Activated naive CD4-positive, alpha-beta T cell treated with anti-CD3 and anti-CD28 coated beads for 36 hours (primary cell): ENCODE measurements at regions of chr14 and their contacts with region 1.

Region 1: DNA sequence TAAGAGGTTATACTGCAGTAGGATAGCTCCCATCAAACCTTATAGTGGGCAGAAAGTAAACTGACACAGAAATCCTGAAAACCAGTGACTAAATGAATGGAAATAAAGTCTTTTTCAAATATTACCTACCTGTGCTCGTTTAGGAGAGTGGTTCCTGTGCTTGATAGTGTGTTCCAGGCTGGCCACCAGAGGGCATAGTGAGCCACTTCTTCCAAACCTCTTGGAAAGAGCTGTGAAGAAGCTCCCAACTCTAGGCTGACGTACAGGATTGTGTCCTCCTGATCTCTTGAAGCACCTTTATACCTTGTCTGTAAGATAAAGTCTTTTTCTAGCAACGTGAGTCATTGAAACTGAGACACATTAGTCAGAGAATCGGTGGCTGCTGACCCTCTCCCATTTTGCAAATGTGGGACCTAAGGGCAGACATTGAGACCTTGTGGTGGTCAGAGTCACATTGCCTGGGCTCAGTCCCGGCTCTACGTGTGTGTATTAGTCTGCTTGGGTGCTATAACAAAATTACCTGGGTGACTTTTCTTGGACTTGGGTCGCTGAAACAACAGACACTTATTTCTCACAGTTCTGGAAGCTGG is 17.6 kb downstream of the TDP1 start:
- DNase-seq: peak; percentile 70
- H3K4me3 Mint-ChIP-seq: no peak overlapping the region
- H3K27ac Mint-ChIP-seq: no peak overlapping the region
- H3K4me1 Mint-ChIP-seq: no peaks in the 10 kb centered on the region
- H3K27me3 Mint-ChIP-seq: no peaks in the 10 kb centered on the region

Region 2: DNA sequence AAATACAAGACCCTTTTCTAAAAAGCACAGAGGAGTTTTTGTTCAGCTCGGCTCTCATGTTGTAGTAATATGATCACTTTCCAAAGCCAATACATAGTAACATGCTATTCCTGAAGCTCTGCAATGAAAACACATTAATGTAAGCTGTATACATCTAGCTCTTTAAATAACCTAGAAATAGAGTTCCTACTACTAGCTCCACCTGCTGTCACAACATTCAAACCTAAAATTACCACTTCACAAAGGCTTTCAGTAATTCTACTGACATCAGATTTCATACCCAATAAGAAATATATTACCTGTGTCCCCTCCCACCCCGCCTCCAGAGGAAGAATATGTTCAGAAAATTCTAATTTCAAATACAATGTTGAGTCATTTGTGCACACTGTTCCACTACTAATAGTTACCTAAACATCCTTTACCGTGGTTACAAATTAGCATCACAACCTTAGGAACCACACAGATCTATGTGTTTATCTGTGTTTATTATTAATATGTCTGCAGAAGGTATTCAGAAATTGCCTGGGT is 36.6 kb before region 1 on chr14:
- CTCF ChIA-PET with region 1: interaction called, 21 read pairs
- intact Hi-C with region 1: loop called (anchors 2 kb)
- DNase-seq: no peak
- H3K4me3 Mint-ChIP-seq: no peak overlapping the region
- H3K27ac Mint-ChIP-seq: no peak overlapping the region
- H3K4me1 Mint-ChIP-seq: peaks cover under 1% of the 10 kb centered on the region
- H3K27me3 Mint-ChIP-seq: no peaks in the 10 kb centered on the region

Region 3: DNA sequence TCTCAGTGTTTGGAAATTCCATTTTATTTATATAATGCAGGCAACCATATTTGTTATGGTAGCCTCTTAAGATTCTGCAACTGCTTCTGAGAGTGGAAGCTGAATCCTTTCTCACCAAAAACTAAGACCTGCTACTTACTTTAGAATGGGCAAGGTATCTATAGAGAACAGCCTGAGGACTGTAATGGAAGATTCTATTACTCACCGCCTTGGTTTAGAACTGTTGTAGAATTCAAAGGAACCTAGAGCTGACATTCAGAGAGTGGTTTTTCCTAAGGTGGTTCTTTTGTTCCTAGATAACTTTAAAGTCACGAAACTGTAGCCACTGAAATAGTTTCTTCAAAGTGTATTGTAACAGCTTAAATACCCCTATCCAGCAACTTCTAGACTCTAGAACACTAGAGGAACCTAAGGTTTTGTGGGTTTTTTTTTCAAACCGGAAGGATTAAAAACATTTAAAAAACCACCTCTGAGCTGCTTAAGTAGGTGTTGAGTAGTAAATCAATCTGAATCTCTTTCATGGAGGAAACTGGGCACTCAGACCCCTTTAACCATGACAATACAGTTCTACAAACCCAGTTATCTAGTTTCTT is 13.4 kb before region 1 on chr14:
- CTCF ChIA-PET with region 1: interaction called, 36 read pairs
- intact Hi-C with region 1: no loop called
- DNase-seq: no peak
- H3K4me3 Mint-ChIP-seq: peak overlapping the region; percentile 36
- H3K27ac Mint-ChIP-seq: peak overlapping the region; percentile 76
- H3K4me1 Mint-ChIP-seq: peaks cover 74% of the 10 kb centered on the region
- H3K27me3 Mint-ChIP-seq: no peaks in the 10 kb centered on the region

Region 4: DNA sequence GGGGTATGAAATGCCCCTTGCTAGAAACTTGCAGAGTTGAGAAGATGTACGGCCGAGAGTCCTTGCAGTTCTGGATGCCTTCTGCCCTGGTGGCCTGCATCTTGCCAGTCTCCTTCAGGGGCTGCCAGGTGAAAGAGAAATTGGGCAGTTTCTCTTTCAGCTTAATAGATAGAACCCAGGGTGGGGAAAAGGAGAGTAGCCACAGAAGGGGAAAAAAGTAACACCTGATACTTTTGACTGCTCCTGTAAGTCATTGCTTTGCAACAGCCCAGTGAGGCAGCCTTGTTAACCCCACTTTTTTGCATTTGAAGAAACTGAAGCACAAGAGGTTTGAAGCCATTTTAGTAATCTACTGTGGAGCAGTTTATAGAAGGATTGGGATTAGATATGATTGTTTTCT is 10.0 kb after region 1 on chr14:
- CTCF ChIA-PET with region 1: interaction called, 21 read pairs
- intact Hi-C with region 1: no loop called
- DNase-seq: no peak
- H3K4me3 Mint-ChIP-seq: no peak overlapping the region
- H3K27ac Mint-ChIP-seq: no peak overlapping the region
- H3K4me1 Mint-ChIP-seq: no peaks in the 10 kb centered on the region
- H3K27me3 Mint-ChIP-seq: no peaks in the 10 kb centered on the region

Region 5: GRCh38 chr14:90060312-90060964 is 87.1 kb after region 1 on chr14:
- CTCF ChIA-PET with region 1: interaction called, 4 read pairs
- intact Hi-C with region 1: loop called (anchors 2 kb)
- DNase-seq: peak; percentile 49
- H3K4me3 Mint-ChIP-seq: peak overlapping the region; percentile 72
- H3K27ac Mint-ChIP-seq: no peak overlapping the region
- H3K4me1 Mint-ChIP-seq: peaks cover 14% of the 10 kb centered on the region
- H3K27me3 Mint-ChIP-seq: peaks cover 54% of the 10 kb centered on the region

Region 6: DNA sequence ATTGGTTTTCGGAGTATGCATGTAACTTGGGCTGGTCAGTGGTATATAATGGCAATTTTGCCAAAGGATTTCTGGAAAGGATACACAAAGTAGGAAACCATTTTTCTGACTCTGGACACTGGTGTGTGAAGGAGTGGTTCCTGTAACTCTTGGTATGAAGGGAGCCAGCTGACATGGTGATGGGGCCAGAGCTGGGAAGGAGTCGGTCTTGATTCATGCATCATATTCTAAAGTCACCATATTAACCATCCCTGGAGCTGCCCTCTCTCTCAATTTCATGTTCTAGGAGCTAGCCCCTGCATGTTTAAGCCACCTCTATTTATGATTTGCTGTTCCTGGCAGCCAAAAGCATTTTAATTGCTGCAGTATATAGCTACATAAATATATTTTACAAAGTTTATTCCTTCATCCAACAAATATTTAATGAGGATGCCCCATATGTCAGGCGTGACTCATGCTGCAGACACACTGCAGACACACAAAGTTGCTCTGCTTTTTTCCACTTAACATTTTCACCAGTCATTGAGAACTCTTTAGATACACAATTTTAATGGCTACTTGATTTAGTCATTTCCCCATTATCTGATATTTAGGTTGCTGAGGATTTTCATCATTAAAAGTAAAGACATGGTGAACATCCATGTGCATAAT is 204.3 kb after region 1 on chr14:
- CTCF ChIA-PET with region 1: no interaction called
- intact Hi-C with region 1: no loop called
- DNase-seq: no peak
- H3K4me3 Mint-ChIP-seq: no peak overlapping the region
- H3K27ac Mint-ChIP-seq: no peak overlapping the region
- H3K4me1 Mint-ChIP-seq: no peaks in the 10 kb centered on the region
- H3K27me3 Mint-ChIP-seq: peaks cover 2% of the 10 kb centered on the region

Region 7: GRCh38 chr14:90235179-90235976 is 262.0 kb after region 1 on chr14:
- CTCF ChIA-PET with region 1: interaction called, 6 read pairs
- intact Hi-C with region 1: loop called (anchors 1 kb)
- DNase-seq: peak; percentile 82
- H3K4me3 Mint-ChIP-seq: no peak overlapping the region
- H3K27ac Mint-ChIP-seq: no peak overlapping the region
- H3K4me1 Mint-ChIP-seq: peaks cover 2% of the 10 kb centered on the region
- H3K27me3 Mint-ChIP-seq: peaks cover 2% of the 10 kb centered on the region